Gastrocnemius medialis (tissue), 4 donors: ENCODE measurements at regions of chr19 and their contacts with region 1.

Region 1: DNA sequence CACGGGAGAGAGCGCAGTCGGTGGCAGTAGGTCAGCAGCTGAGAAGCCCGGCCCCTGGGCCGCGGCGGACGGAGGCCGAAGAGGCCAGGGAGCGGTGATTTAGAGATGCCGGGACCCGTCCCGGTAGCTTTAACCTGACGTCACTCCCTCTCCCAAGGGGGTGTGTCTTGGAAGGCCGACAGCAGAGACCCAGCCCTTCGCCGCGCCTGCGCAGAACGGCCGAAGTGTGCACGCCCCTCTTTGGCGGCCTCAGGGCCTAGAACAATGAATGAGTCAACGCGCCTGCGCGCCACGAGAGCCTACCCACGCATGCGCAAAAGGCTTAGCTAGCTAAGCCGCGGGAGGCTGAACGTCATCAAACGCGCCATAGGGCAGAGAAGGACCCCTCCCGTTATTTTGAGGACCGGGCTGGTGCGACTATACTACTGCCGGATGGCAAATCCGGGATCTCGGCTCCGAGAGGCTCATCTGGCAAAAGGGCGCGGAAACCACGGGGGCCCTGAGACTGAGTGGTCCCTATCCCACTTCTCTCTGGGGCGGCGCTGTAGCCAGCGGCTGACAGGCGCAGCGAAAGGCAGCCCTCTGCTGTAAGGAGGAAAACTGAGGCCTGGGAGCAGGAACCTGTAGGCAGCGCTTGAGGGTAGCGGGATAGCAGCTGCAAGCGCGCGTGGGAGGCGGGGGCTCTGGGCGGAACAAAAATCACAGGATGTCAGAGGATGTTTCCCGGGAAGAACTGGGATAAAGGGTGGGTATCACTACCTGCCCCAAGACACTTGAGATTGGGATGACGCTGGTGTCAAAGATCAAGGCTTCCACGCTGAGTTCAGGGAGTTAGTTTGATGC is at the starts of genes IRGQ and ZNF576:
- DNase-seq: peak; percentile 100
- ATAC-seq: peak; percentile 97
- H3K4me3 ChIP-seq: peak within 1 kb of the TSS; percentile 65 to 86 (median 77)
- H3K27ac ChIP-seq: peak within 1 kb of the TSS; percentile 93 to 98 (median 96)
- H3K4me1 ChIP-seq: peaks cover 27 to 34% of the 10 kb centered on the region in 2 donors
- H3K27me3 ChIP-seq: no peaks in the 10 kb centered on the region
- CTCF ChIP-seq: peak in 2 of 5 experiments; percentile 8
- POLR2A ChIP-seq: peak; percentile 89 to 93
- total RNA-seq, gene IRGQ: 20.2 to 25.8 (median 23.6) TPM
- total RNA-seq, gene ZNF576: 6.9 to 19.8 (median 11.6) TPM

Region 2: GRCh38 chr19:43575156-43575950 is 20.9 kb before region 1 on chr19 and contains the starts of genes PINLYP and XRCC1:
- in situ Hi-C with region 1: no loop called
- intact Hi-C with region 1: loop called (anchors 1 kb)
- DNase-seq: peak; percentile 96 to 97
- ATAC-seq: peak; percentile 100
- H3K4me3 ChIP-seq: peak within 1 kb of the TSS; percentile 75 to 98 (median 88)
- H3K27ac ChIP-seq: peak within 1 kb of the TSS; percentile 77 to 87 (median 82)
- H3K4me1 ChIP-seq: peaks cover 10 to 13% of the 10 kb centered on the region in 2 donors
- H3K27me3 ChIP-seq: no peaks in the 10 kb centered on the region
- CTCF ChIP-seq: no peak
- POLR2A ChIP-seq: peak; percentile 43 to 44
- total RNA-seq, gene PINLYP: 1.2 TPM in 1 of 4 donors, not detected in the others
- total RNA-seq, gene XRCC1: 9.3 to 20.3 (median 16.7) TPM

Region 3: GRCh38 chr19:43619262-43620060 is 23.2 kb after region 1 on chr19 and contains the start of gene ZNF428:
- in situ Hi-C with region 1: no loop called
- intact Hi-C with region 1: loop called (anchors 1 kb)
- DNase-seq: peak; percentile 70 to 84
- ATAC-seq: peak; percentile 88 to 91
- H3K4me3 ChIP-seq: peak within 1 kb of the TSS; percentile 82 to 99 (median 90)
- H3K27ac ChIP-seq: peak within 1 kb of the TSS; percentile 90 to 96 (median 94)
- H3K4me1 ChIP-seq: peaks cover 8 to 19% of the 10 kb centered on the region in 2 donors
- H3K27me3 ChIP-seq: no peaks in the 10 kb centered on the region
- CTCF ChIP-seq: no peak
- POLR2A ChIP-seq: peak; percentile 75 to 77
- total RNA-seq, gene ZNF428: 15.4 to 26.7 (median 20.0) TPM

Region 4: GRCh38 chr19:43651758-43652545 is 55.7 kb after region 1 on chr19:
- in situ Hi-C with region 1: no loop called
- intact Hi-C with region 1: loop called (anchors 2 kb)
- DNase-seq: peak; percentile 12 to 43
- ATAC-seq: peak; percentile 69 to 79
- H3K4me3 ChIP-seq: no peak overlapping the region
- H3K27ac ChIP-seq: no peak overlapping the region
- H3K4me1 ChIP-seq: no peaks in the 10 kb centered on the region
- H3K27me3 ChIP-seq: no peaks in the 10 kb centered on the region
- CTCF ChIP-seq: peak; percentile 44 to 71 (median 58)
- POLR2A ChIP-seq: no peak

Region 5: GRCh38 chr19:43754503-43755255 is 158.5 kb after region 1 on chr19 and contains the start of gene SMG9:
- in situ Hi-C with region 1: no loop called
- intact Hi-C with region 1: loop called (anchors 1 kb)
- DNase-seq: peak; percentile 96 to 97
- ATAC-seq: peak; percentile 93 to 94
- H3K4me3 ChIP-seq: peak within 1 kb of the TSS; percentile 75 to 82 (median 80)
- H3K27ac ChIP-seq: peak within 1 kb of the TSS; percentile 98 to 99 (median 98)
- H3K4me1 ChIP-seq: peaks cover 5 to 19% of the 10 kb centered on the region in 2 donors
- H3K27me3 ChIP-seq: no peaks in the 10 kb centered on the region
- CTCF ChIP-seq: no peak
- POLR2A ChIP-seq: peak; percentile 70 to 77
- total RNA-seq, gene SMG9: 4.5 to 9.1 (median 7.1) TPM